IMR-90 (cell line): ENCODE measurements at regions of chr2 and their contacts with region 1.

Region 1: GRCh38 chr2:28661589-28662001 is 90.0 kb upstream of the PPP1CB start:
- DNase-seq: peak; percentile 88
- ATAC-seq: peak; percentile 5
- H3K4me3 ChIP-seq: no peak overlapping the region
- H3K27ac ChIP-seq: peak overlapping the region; percentile 49; the same call in 1 of the 2 replicates
- H3K4me1 ChIP-seq: peaks cover 34% of the 10 kb centered on the region
- H3K27me3 ChIP-seq: no peaks in the 10 kb centered on the region
- CTCF ChIP-seq: no peak
- POLR2A ChIP-seq: no peak
- RAD21 ChIP-seq: no peak; the same call in 1 of the 2 replicates

Region 2: GRCh38 chr2:28544919-28545589 is 116.5 kb before region 1 on chr2:
- CTCF ChIA-PET with region 1: no interaction called
- POLR2A ChIA-PET with region 1: no interaction called
- dilution Hi-C with region 1: no loop called
- in situ Hi-C with region 1: no loop called
- intact Hi-C with region 1: no loop called
- DNase-seq: peak; percentile 15
- ATAC-seq: no peak
- H3K4me3 ChIP-seq: no peak overlapping the region
- H3K27ac ChIP-seq: no peak overlapping the region
- H3K4me1 ChIP-seq: no peaks in the 10 kb centered on the region
- H3K27me3 ChIP-seq: peaks cover 35% of the 10 kb centered on the region
- CTCF ChIP-seq: no peak
- POLR2A ChIP-seq: no peak
- RAD21 ChIP-seq: no peak

Region 3: GRCh38 chr2:28594289-28595108 is 67.1 kb before region 1 on chr2:
- CTCF ChIA-PET with region 1: interaction called, 24 read pairs
- POLR2A ChIA-PET with region 1: interaction called, 3 read pairs
- dilution Hi-C with region 1: no loop called
- in situ Hi-C with region 1: no loop called
- intact Hi-C with region 1: loop called (anchors 1 kb)
- DNase-seq: peak; percentile 82
- ATAC-seq: peak; percentile 83
- H3K4me3 ChIP-seq: no peak overlapping the region
- H3K27ac ChIP-seq: peak overlapping the region; percentile 5; the same call in 1 of the 2 replicates
- H3K4me1 ChIP-seq: peaks cover 5% of the 10 kb centered on the region
- H3K27me3 ChIP-seq: no peaks in the 10 kb centered on the region
- CTCF ChIP-seq: peak; percentile 83
- POLR2A ChIP-seq: no peak
- RAD21 ChIP-seq: peak; percentile 88

Region 4: DNA sequence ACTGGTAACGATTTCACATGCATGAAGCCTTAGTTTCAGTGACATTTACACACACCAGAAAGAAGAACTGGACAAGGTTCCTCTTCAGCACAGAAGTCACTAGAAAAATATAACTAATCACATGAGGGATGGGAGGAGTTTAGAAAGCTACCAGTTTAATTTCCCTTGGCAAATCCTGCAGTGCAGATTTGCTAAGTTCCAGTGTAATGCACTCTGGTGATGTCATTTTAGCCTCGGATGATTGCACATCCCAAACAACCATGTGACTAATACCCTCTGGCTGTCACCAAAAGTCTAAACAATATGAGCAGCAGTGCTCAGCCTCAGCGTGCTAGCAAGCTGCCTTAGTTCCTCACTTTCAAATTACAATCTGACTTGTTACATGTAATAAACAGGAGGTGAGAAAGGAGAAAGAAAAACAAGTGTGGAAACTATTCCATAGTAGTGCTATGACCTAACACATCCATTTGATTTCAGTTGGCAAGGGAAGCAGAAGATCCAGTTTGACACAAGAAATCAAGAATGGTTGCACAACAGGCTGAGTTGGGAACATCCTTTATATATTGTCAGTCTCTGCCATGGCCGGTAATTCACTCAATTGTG is 54.8 kb after region 1 on chr2:
- CTCF ChIA-PET with region 1: no interaction called
- POLR2A ChIA-PET with region 1: no interaction called
- dilution Hi-C with region 1: no loop called
- in situ Hi-C with region 1: no loop called
- intact Hi-C with region 1: loop called (anchors 2 kb)
- DNase-seq: peak; percentile 98
- ATAC-seq: peak; percentile 91
- H3K4me3 ChIP-seq: no peak overlapping the region; the same call in 1 of the 2 replicates
- H3K27ac ChIP-seq: peak overlapping the region; percentile 47; the same call in 1 of the 2 replicates
- H3K4me1 ChIP-seq: peaks cover 7% of the 10 kb centered on the region
- H3K27me3 ChIP-seq: no peaks in the 10 kb centered on the region
- CTCF ChIP-seq: no peak
- POLR2A ChIP-seq: no peak
- RAD21 ChIP-seq: 0 out of 2 replicates have a peak, but pooled peaks have one; percentile 10

Region 5: GRCh38 chr2:28894470-28895177 is 233.0 kb after region 1 on chr2 and contains the start of gene WDR43:
- CTCF ChIA-PET with region 1: no interaction called
- POLR2A ChIA-PET with region 1: interaction called, 14 read pairs
- dilution Hi-C with region 1: no loop called
- in situ Hi-C with region 1: no loop called
- intact Hi-C with region 1: loop called (anchors 10 kb)
- DNase-seq: peak; percentile 99
- ATAC-seq: peak; percentile 97
- H3K4me3 ChIP-seq: peak within 1 kb of the TSS; percentile 88
- H3K27ac ChIP-seq: peak within 1 kb of the TSS; percentile 88
- H3K4me1 ChIP-seq: peaks cover 2% of the 10 kb centered on the region; the same call in 1 of the 2 replicates
- H3K27me3 ChIP-seq: no peaks in the 10 kb centered on the region
- CTCF ChIP-seq: no peak
- POLR2A ChIP-seq: peak; percentile 85
- RAD21 ChIP-seq: no peak
- total RNA-seq, gene WDR43: 220 and 300 TPM in 2 replicates